Activated CD4-positive, alpha-beta memory T cell treated with anti-CD3 and anti-CD28 coated beads, Interleukin-2, amount 10 ng/mL, durations not matched to agents 7 days and 5 days (primary cell): ENCODE measurements at regions of chr6 and their contacts with region 1.

Region 1: DNA sequence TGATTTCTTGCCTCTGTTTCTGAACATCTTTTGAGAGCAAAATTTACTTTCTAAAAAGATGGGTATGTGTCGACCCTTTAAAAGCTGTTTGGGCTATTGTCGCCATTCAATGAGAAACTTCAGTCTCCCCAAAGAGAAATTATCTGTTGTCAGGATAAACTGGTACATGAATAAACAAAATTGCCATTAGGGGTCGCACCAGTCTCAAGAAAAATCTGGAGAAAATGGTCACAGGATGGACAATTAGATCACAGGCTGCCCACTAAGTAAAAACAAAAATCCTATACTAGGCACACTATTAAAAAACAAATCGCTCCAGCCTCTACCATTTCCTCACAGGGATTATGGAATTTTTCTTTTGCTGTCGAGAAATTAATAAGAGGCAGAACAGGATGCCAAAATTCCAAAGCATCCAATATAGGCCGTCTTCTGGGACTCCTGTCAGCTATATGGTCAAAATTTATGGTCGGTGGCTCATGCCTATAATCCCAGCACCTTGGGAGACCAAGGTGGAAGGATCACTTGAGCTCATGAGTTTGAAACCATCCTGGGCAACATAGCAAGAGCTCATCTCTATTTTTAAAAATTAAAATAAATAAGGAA is 5.5 kb upstream of the HLA-E start:
- DNase-seq: no peak
- H3K4me3 Mint-ChIP-seq: no peak overlapping the region
- H3K27ac Mint-ChIP-seq: no peak overlapping the region
- H3K4me1 Mint-ChIP-seq: peaks cover 35% of the 10 kb centered on the region
- H3K27me3 Mint-ChIP-seq: peaks cover 60% of the 10 kb centered on the region

Region 2: GRCh38 chr6:30453508-30454116 is 30.2 kb before region 1 on chr6:
- CTCF ChIA-PET with region 1: interaction called, 10 read pairs
- POLR2A ChIA-PET with region 1: interaction called, 4 read pairs
- DNase-seq: peak; percentile 81
- H3K4me3 Mint-ChIP-seq: no peak overlapping the region
- H3K27ac Mint-ChIP-seq: no peak overlapping the region
- H3K4me1 Mint-ChIP-seq: peaks cover 30% of the 10 kb centered on the region
- H3K27me3 Mint-ChIP-seq: peaks cover 87% of the 10 kb centered on the region

Region 3: GRCh38 chr6:30470968-30471367 is 12.8 kb before region 1 on chr6:
- CTCF ChIA-PET with region 1: interaction called, 18 read pairs
- POLR2A ChIA-PET with region 1: interaction called, 7 read pairs
- DNase-seq: no peak
- H3K4me3 Mint-ChIP-seq: no peak overlapping the region
- H3K27ac Mint-ChIP-seq: no peak overlapping the region
- H3K4me1 Mint-ChIP-seq: peaks cover 9% of the 10 kb centered on the region
- H3K27me3 Mint-ChIP-seq: peaks cover 78% of the 10 kb centered on the region

Region 4: DNA sequence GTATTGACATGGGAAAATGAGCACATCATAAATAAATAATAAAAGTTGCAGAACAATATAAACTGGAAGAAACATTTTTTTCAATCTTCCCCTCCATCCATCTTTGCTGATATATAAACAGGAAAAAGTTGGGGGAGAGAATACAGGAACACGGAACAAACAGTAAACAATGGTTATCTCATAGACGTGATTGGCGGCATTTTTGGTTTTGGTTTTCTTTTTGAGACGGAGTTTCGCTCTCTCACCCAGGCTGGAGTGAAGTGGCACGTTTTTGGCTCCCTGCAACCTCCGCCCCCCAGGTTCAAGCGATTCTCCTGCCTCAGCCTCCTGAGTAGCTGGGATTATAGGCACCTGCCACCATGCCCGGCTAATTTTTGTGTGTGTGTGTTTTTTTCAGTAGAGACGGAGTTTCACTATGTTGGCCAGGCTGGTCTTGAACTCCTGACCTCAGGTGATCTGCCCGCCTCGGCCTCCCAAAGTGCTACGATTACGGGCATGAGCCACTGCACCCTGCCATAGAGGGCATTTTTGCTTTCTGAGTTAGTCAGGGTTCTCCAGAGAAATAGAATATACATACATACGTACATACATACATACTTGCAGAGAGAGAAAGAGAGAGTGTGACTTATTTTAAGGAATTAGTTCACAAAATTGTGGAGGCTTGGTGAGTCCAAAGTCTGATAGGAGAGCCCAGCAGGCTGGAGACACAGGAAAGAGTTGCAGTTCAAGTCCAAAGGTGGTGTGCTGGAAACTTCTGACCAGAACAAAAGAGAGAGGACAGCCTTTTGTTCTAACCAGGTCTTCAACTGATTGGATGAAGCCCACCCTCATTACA is 49.9 kb after region 1 on chr6:
- CTCF ChIA-PET with region 1: interaction called, 267 read pairs
- POLR2A ChIA-PET with region 1: interaction called, 4 read pairs
- DNase-seq: peak; percentile 42
- H3K4me3 Mint-ChIP-seq: peak overlapping the region; percentile 80
- H3K27ac Mint-ChIP-seq: peak overlapping the region; percentile 85
- H3K4me1 Mint-ChIP-seq: peaks cover 41% of the 10 kb centered on the region
- H3K27me3 Mint-ChIP-seq: no peaks in the 10 kb centered on the region

Region 5: GRCh38 chr6:30600451-30600961 is 116.7 kb after region 1 on chr6:
- CTCF ChIA-PET with region 1: interaction called, 63 read pairs
- POLR2A ChIA-PET with region 1: interaction called, 11 read pairs
- DNase-seq: no peak
- H3K4me3 Mint-ChIP-seq: no peak overlapping the region
- H3K27ac Mint-ChIP-seq: no peak overlapping the region
- H3K4me1 Mint-ChIP-seq: peaks cover 22% of the 10 kb centered on the region
- H3K27me3 Mint-ChIP-seq: no peaks in the 10 kb centered on the region

Region 6: DNA sequence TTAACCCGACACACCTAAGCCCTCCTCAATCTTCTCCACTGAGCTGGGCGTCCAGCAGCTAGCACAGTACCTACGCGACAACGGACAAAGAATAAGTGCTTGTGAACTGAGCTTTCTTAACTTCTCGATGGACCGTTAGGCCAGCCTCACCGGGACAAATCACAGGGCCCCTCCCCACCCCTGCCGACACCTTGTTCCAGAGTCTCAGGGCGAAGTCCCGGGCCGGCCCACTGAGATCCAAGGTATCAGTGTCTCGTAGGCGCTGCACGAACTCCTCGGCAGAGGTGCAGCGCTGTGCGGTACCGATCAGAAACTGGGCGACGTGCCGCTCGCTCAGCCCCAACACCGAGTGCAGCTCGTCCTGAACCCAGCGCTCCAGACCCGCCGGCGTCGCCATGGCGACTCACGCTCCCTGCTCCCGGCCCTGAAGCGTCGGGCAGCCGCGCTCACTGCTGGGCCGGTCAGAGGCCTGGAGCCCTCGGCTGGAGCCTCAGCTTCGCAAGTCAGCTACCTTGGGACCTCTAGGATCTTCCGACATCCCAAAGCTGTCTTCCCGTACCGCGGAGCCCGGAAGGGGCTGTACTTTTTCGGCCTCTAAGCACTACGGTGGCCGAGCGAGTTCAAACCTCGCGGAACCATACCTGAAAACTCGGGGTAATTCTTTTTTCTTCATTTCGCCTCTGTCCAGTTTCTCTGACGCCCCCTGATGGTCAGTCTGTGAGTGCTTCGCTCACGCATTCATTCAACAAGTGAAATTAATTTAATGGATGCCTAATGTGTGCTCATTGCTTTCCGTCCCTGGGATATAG is 188.9 kb after region 1 on chr6 and contains the start of gene DHX16:
- CTCF ChIA-PET with region 1: interaction called, 11 read pairs
- POLR2A ChIA-PET with region 1: no interaction called
- DNase-seq: peak; percentile 92
- H3K4me3 Mint-ChIP-seq: peak within 1 kb of the TSS; percentile 89
- H3K27ac Mint-ChIP-seq: peak within 1 kb of the TSS; percentile 18
- H3K4me1 Mint-ChIP-seq: peaks cover 42% of the 10 kb centered on the region
- H3K27me3 Mint-ChIP-seq: no peaks in the 10 kb centered on the region
- total RNA-seq, gene DHX16: 35.6 to 37.6 TPM

Region 7: GRCh38 chr6:30717042-30717844 is 233.5 kb after region 1 on chr6 and contains the start of gene MDC1:
- CTCF ChIA-PET with region 1: interaction called, 20 read pairs
- POLR2A ChIA-PET with region 1: no interaction called
- DNase-seq: peak; percentile 100
- H3K4me3 Mint-ChIP-seq: peak within 1 kb of the TSS; percentile 84
- H3K27ac Mint-ChIP-seq: peak within 1 kb of the TSS; percentile 99
- H3K4me1 Mint-ChIP-seq: peaks cover 62% of the 10 kb centered on the region
- H3K27me3 Mint-ChIP-seq: no peaks in the 10 kb centered on the region
- total RNA-seq, gene MDC1: 49.7 to 54.6 TPM

Region 8: DNA sequence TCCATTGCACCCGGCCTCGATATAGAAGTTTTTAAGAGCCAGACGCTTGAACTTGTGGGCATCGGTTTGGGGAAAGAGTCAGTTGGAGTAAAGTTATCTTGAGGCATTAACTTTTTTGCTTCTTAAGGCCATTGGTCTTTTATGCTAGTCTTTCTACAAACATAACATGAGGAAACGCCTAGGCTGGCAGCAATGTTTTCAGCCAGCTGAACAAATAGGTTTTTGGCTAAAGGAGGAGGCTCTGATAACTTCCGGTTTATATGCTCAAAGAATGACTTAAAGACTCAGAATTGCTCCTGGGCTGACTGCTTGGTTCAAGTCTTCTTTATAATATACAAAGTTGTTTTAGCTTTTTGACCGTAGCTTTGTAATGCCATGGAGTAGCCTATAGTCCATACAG is 742.0 kb after region 1 on chr6:
- CTCF ChIA-PET with region 1: no interaction called
- POLR2A ChIA-PET with region 1: no interaction called
- DNase-seq: no peak
- H3K4me3 Mint-ChIP-seq: no peak overlapping the region
- H3K27ac Mint-ChIP-seq: no peak overlapping the region
- H3K4me1 Mint-ChIP-seq: no peaks in the 10 kb centered on the region
- H3K27me3 Mint-ChIP-seq: peaks cover 10% of the 10 kb centered on the region